ENCODE measurements at regions of chr4 and their contacts with region 1.

Region 1: DNA sequence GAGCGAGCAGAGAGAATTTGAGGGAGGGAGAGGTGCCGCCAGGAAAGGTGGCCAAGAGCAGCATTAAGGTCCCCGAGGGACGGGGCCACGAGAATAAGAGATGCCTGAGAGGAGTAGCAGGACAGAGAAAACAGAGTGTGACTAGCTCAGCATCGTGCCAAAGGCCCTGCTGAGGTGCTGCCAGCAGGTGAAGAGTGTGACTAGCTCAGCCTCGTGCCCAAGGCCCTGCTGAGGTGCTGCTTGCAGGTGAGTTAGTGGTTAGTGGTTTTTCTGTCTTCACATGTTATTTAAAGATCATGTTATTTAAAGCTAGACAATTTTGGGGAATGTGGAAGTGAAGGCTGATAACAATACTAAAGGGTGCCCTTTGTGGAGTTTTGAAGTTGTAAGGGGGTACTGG is 464.5 kb upstream of the FAT1 start:
- DNase-seq: no peak
- ATAC-seq: no peak

Region 2: DNA sequence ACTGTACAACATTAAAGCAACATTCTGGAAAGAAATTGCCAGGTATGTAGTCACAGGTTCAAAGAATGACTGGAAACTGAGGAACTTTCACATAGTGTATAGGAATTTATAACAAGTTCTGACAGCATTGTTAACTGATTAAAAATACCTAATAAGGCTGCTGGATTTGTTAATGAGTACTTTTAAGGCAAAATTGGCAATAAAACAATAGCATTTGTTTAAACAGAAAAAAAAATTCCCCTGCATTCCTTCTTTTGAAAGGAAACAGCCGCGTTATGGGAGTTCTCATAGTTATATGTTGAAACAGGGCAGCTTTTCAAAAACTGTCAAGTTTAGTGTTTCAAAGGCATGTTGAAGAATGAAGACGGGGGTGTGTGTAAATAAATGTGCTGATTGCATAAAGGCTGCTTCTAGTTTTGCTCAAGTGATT is 181.9 kb before region 1 on chr4:
- intact Hi-C with region 1: no loop called
- DNase-seq: no peak
- ATAC-seq: no peak

Region 3: DNA sequence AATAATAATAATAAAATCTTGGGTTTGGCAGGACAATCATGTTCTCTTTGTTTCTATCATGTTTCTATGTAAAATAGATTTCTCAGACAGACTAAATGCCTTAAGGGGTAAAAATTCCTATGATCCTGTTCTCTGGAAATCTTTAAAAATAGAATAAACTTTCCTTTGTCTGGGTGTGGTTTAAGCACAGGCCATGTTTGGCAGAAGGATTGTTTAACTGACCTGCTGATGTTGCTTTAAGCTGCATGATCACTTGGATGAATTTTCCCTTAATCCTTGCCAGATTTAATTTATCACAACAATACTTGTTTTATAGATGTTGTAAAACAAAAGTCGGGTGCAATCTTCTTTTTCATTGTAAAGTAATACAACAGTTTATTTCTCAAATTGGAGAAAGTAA is 122.7 kb before region 1 on chr4:
- intact Hi-C with region 1: no loop called
- DNase-seq: no peak
- ATAC-seq: peak; percentile 63

Region 4: DNA sequence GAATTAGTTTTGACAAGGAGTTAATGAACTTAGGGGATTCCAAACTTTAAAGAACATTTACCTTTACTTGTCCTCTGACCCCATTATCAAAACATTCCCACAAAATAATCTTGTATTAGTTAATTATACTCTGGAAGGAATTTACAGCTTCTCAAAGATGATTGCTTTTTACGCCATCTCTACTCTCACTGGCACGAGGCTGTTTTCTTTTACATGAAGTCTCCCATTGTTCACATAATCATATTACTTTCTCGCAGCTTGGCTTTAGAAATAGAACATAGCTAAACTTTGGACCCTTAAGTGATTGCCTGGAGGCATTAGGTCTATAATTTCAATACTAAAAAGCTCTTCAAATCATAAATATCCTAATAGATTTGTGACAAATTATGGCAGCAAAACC is 1544.0 kb after region 1 on chr4:
- intact Hi-C with region 1: loop called (anchors 5 kb)
- DNase-seq: no peak
- ATAC-seq: no peak